CD4-positive, alpha-beta T cell (primary cell): ENCODE measurements at regions of chr16 and their contacts with region 1.

Region 1: GRCh38 chr16:57300387-57301125 is 16.1 kb upstream of the PLLP start:
- DNase-seq: peak; percentile 97 to 100 (median 99)
- ATAC-seq: peak; percentile 91
- H3K4me3 ChIP-seq: peak overlapping the region; percentile 58
- H3K4me3 Mint-ChIP-seq: no peak overlapping the region
- H3K27ac ChIP-seq: peak overlapping the region; percentile 50 to 79
- H3K27ac Mint-ChIP-seq: no peak overlapping the region
- H3K4me1 ChIP-seq: peaks cover 54% of the 10 kb centered on the region
- H3K4me1 Mint-ChIP-seq: peaks cover 16% of the 10 kb centered on the region
- H3K27me3 ChIP-seq: no peaks in the 10 kb centered on the region
- H3K27me3 Mint-ChIP-seq: no peaks in the 10 kb centered on the region
- CTCF ChIP-seq: peak; percentile 88

Region 2: DNA sequence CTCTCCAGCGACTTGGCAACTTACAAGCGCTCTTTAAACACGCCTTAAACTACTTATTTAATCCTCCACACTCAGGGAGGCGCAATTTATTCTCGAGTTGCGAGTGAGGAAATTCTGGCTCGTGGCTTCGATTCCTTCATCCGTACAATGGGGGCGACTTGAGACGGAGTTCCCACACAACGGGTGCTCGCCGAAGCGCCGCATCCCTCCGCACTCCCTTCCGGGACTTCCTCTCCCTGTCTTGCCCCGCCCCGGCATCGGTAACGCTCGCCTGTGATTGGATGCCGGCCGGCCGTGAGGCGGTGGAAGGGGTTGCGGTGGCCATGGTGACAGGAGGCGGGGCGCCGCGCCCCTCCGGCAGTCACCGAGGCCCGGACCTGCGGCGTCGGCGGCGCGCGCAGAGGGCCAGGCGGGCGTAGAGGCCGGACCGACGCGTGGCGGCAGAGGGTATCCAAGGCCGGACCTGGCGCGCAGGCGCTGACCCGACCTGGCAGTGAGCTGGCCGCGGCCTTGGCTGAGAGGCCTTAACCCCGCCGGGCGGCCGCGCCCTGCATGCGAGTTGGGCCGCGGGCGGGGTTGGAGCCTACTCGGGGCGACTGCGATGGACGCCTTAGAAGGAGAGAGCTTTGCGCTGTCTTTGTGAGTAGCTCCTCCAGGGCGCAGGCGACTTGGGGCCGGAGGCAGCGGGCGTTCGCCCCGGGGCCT is 55.6 kb before region 1 on chr16 and contains the start of gene ARL2BP:
- CTCF ChIA-PET with region 1: interaction called, 5 read pairs
- POLR2A ChIA-PET with region 1: interaction called, 12 read pairs
- intact Hi-C with region 1: loop called (anchors 1 kb)
- DNase-seq: peak; percentile 93 to 98 (median 97)
- ATAC-seq: peak; percentile 94
- H3K4me3 ChIP-seq: peak within 1 kb of the TSS; percentile 64
- H3K4me3 Mint-ChIP-seq: peak within 1 kb of the TSS; percentile 89
- H3K27ac ChIP-seq: peak within 1 kb of the TSS; percentile 63 to 68
- H3K27ac Mint-ChIP-seq: peak within 1 kb of the TSS; percentile 86
- H3K4me1 ChIP-seq: peaks cover 19% of the 10 kb centered on the region
- H3K4me1 Mint-ChIP-seq: peaks cover 21% of the 10 kb centered on the region
- H3K27me3 ChIP-seq: no peaks in the 10 kb centered on the region
- H3K27me3 Mint-ChIP-seq: no peaks in the 10 kb centered on the region
- CTCF ChIP-seq: peak; percentile 53
- total RNA-seq, gene ARL2BP: 32.4 to 35.6 TPM

Region 3: DNA sequence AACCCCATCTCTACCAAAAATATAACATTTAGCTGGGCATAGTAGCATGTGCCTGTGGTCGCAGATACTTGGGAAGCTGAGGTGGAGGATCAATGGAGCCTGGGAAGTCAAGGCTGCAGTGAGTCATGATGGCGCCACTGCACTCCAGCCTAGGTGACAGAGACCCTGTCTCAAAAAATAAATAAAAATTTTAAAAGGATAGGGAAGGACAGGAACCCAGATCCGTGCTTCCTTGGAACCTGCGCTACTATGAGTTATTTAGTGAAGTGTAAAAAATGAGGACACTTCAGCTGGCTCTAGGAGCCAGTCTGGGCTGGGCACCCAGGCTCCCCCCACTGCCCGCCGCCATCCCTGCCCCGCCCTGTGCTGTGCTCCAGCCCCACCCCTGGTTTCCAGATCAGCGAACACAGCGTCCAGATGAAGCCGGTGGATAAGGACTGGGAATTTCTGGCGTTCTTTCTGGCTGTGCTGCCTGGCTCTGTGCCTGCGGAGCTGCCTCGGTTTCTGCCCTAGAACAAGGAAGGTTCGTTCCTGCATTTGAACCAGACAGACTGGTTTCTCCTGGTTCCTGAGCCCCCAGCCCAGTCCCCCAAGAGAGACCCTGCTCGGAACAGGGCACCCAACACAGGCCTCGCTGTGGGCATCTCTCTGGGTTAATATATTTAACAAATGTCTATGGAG is 34.6 kb before region 1 on chr16:
- CTCF ChIA-PET with region 1: no interaction called
- POLR2A ChIA-PET with region 1: interaction called, 12 read pairs
- intact Hi-C with region 1: loop called (anchors 1 to 2 kb)
- DNase-seq: no peak
- ATAC-seq: no peak
- H3K4me3 ChIP-seq: no peak overlapping the region
- H3K4me3 Mint-ChIP-seq: peak overlapping the region; percentile 43
- H3K27ac ChIP-seq: peak overlapping the region in 1 of 2 donors; percentile 57
- H3K27ac Mint-ChIP-seq: peak overlapping the region; percentile 97
- H3K4me1 ChIP-seq: peaks cover 55% of the 10 kb centered on the region
- H3K4me1 Mint-ChIP-seq: peaks cover 53% of the 10 kb centered on the region
- H3K27me3 ChIP-seq: no peaks in the 10 kb centered on the region
- H3K27me3 Mint-ChIP-seq: no peaks in the 10 kb centered on the region
- CTCF ChIP-seq: no peak

Region 4: DNA sequence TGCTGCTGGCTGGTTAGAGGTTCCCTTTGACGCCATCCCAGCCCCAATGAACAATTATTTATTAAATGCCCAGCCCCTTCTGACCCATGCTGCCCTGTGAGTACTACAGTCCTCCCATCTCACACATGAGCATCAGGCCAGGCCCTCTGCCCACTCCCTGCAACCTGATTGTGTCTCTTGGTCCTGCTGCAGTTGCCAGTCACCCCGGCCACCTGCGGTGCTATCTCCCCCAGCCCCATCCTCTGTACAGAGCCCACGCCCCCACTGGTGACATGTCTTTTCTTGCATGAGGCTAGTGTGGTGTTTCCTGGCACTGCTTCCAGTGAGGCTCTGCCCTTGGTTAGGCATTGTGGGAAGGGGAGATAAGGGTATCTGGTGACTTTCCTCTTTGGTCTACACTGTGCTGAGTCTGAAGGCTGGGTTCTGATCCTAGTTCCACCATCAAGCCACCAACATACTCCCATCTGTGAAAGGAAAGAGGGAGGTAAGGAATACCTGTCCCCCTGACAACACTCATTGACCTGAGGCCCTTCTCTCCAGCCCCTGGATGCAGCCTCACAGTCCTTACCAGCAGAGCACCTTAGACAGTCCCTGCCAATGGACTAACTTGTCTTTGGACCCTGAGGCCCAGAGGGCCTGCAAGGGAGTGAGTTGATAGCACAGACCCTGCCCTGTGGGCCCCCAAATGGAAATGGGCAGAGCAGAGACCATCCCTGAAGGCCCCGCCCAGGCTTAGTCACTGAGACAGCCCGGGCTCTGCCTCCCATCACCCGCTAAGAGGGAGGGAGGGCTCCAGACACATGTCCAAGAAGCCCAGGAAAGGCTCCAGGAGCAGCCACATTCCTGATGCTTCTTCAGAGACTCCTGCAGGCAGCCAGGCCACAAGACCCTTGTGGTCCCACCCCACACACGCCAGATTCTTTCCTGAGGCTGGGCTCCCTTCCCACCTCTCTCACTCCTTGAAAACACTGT is 83.0 kb after region 1 on chr16:
- CTCF ChIA-PET with region 1: no interaction called
- POLR2A ChIA-PET with region 1: no interaction called
- intact Hi-C with region 1: no loop called
- DNase-seq: peak in 1 of 14 experiments; percentile 6
- ATAC-seq: no peak
- H3K4me3 ChIP-seq: no peak overlapping the region
- H3K4me3 Mint-ChIP-seq: no peak overlapping the region
- H3K27ac ChIP-seq: no peak overlapping the region
- H3K27ac Mint-ChIP-seq: no peak overlapping the region
- H3K4me1 ChIP-seq: peaks cover 4% of the 10 kb centered on the region
- H3K4me1 Mint-ChIP-seq: no peaks in the 10 kb centered on the region
- H3K27me3 ChIP-seq: peaks cover 0 to 2% of the 10 kb centered on the region in 2 experiments
- H3K27me3 Mint-ChIP-seq: no peaks in the 10 kb centered on the region
- CTCF ChIP-seq: no peak

Region 5: DNA sequence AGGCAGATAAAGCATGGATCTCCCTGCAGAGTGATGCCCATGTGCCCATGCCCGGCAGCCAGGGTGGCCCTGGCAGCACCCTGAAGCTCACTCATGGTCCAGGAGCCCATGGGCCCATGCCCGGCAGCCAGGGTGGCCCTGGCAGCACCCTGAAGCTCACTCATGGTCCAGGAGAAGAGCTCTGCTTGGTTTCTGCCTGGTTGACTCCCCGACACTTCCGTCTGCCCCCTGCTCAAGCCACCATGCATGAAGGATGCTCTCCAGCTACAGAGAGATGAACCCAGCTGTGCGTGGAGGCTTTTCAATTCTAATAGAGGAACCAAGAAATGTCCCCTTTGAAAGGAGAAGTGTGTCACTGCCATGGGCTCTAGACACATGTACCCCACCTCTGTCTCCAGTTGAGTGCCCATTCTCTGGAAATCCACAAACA is 112.8 kb after region 1 on chr16:
- CTCF ChIA-PET with region 1: interaction called, 72 read pairs
- POLR2A ChIA-PET with region 1: interaction called, 31 read pairs
- intact Hi-C with region 1: loop called (anchors 1 kb)
- DNase-seq: no peak
- ATAC-seq: no peak
- H3K4me3 ChIP-seq: no peak overlapping the region
- H3K4me3 Mint-ChIP-seq: no peak overlapping the region
- H3K27ac ChIP-seq: no peak overlapping the region
- H3K27ac Mint-ChIP-seq: no peak overlapping the region
- H3K4me1 ChIP-seq: peaks cover 16% of the 10 kb centered on the region
- H3K4me1 Mint-ChIP-seq: peaks cover 7% of the 10 kb centered on the region
- H3K27me3 ChIP-seq: no peaks in the 10 kb centered on the region
- H3K27me3 Mint-ChIP-seq: no peaks in the 10 kb centered on the region
- CTCF ChIP-seq: no peak

Region 6: DNA sequence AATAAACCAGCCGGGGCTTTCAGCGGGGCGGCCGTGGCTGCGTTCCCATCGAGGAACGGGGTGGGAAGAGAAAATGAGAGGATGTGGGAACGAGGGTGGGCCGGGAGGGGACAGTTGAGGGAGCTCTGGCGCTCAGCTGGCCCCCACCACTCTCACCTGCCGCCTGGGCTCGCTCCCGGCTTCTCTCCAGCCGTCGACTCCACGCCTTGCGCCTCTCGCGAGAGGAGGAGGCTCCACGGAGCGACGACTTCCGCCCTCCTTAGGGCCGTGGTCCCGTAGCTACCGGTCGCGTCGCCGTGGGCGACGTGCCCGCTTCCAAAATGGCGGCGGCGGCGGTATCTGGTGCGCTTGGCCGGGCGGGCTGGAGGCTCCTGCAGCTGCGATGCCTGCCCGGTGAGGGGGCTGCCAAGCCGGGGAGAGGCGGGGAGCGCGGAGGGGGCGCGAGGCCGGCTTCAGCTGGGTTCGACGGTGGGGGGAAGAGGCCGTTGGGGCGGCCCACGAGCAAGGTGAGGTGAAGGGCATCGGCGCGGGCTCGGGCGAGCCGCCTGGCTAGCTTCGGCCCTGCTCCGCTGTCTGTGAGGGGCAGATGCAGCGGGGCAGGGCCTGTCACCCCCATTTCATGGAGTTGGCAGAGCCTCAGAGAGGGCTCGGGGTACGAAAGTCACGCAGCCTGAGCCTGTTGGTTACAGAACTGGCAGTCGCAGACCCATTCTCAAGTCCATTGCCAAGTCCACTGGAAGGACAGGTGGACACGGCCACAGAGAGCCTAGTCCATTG is 146.8 kb after region 1 on chr16 and contains the starts of genes CIAPIN1 and COQ9:
- CTCF ChIA-PET with region 1: interaction called, 7 read pairs
- POLR2A ChIA-PET with region 1: interaction called, 10 read pairs
- intact Hi-C with region 1: no loop called
- DNase-seq: peak; percentile 83 to 97 (median 92)
- ATAC-seq: peak; percentile 99
- H3K4me3 ChIP-seq: peak within 1 kb of the TSS; percentile 96
- H3K4me3 Mint-ChIP-seq: peak within 1 kb of the TSS; percentile 96
- H3K27ac ChIP-seq: peak within 1 kb of the TSS; percentile 73 to 79
- H3K27ac Mint-ChIP-seq: peak within 1 kb of the TSS; percentile 88
- H3K4me1 ChIP-seq: peaks cover 29% of the 10 kb centered on the region
- H3K4me1 Mint-ChIP-seq: peaks cover 34% of the 10 kb centered on the region
- H3K27me3 ChIP-seq: no peaks in the 10 kb centered on the region
- H3K27me3 Mint-ChIP-seq: no peaks in the 10 kb centered on the region
- CTCF ChIP-seq: no peak
- total RNA-seq, gene CIAPIN1: 27.8 to 28.0 TPM
- total RNA-seq, gene COQ9: 7.0 to 7.6 TPM

Region 7: DNA sequence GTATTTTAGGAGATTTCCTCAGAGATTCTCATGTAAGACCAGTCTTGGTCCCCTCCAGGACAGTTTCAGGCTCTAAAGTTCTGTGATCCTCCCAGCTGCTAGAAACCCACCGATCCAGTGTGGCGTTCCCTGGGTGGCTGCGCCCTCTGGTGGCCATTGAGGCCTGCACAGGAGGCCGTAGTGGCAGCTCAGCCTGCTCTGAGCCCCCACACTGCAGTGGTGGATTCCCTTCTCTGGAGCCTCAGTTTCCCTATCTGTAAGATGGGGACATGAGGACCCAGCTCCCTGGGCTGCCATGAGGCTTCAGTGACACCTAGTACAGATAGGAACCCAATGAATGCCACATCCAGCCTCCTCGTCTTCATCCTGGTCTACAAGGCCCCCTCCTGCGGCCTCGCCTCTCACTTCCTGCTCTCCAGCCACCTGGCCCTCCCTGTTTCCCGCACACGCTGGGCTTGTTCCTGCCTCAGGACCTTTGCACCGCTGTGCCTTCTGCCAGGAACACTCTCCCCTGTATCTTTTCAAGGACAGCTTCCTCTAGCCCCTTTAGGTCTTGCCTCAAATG is 219.3 kb after region 1 on chr16:
- CTCF ChIA-PET with region 1: interaction called, 14 read pairs
- POLR2A ChIA-PET with region 1: interaction called, 5 read pairs
- intact Hi-C with region 1: loop called (anchors 1 kb)
- DNase-seq: peak; percentile 67 to 89 (median 78)
- ATAC-seq: peak; percentile 99
- H3K4me3 ChIP-seq: no peak overlapping the region
- H3K4me3 Mint-ChIP-seq: no peak overlapping the region
- H3K27ac ChIP-seq: no peak overlapping the region
- H3K27ac Mint-ChIP-seq: no peak overlapping the region
- H3K4me1 ChIP-seq: peaks cover 7% of the 10 kb centered on the region
- H3K4me1 Mint-ChIP-seq: peaks cover 5% of the 10 kb centered on the region
- H3K27me3 ChIP-seq: no peaks in the 10 kb centered on the region
- H3K27me3 Mint-ChIP-seq: no peaks in the 10 kb centered on the region
- CTCF ChIP-seq: peak; percentile 98

Region 8: DNA sequence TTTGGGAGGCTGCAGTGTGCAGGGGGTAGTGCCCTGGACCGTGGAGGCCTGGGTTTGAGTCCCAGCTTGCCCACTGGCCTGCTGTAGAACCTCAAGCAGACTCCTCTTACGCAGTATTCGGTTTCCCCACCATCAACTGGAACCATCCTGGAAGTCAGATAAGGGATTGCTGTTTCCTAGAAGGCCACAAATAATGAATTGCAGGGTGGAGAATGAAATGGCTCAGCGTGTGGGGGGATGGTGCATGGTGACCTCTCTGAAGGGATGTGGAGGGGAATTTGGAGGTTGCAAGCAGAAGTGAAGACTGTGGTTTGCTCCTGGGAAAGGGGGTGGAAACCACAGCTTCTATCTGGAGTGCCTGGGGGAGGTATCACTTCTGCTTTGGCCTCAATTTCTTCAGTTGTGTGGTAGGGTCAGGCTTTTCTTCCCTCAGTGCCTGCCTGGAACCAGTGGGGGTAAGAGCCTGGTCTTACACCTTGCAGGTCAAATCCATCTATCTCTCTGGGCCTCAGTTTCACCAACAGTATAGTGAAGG is 243.6 kb after region 1 on chr16:
- CTCF ChIA-PET with region 1: no interaction called
- POLR2A ChIA-PET with region 1: no interaction called
- intact Hi-C with region 1: no loop called
- DNase-seq: peak in 3 of 14 experiments; percentile 47 to 69 (median 65)
- ATAC-seq: peak; percentile 24
- H3K4me3 ChIP-seq: peak overlapping the region; percentile 60
- H3K4me3 Mint-ChIP-seq: peak overlapping the region; percentile 21
- H3K27ac ChIP-seq: no peak overlapping the region
- H3K27ac Mint-ChIP-seq: no peak overlapping the region
- H3K4me1 ChIP-seq: peaks cover 49% of the 10 kb centered on the region
- H3K4me1 Mint-ChIP-seq: peaks cover 45% of the 10 kb centered on the region
- H3K27me3 ChIP-seq: no peaks in the 10 kb centered on the region
- H3K27me3 Mint-ChIP-seq: no peaks in the 10 kb centered on the region
- CTCF ChIP-seq: no peak